T-cell (primary cell): ENCODE measurements at regions of chr11 and their contacts with region 1.

Region 1: GRCh38 chr11:126480410-126481302 is 125.2 kb downstream of the ST3GAL4 start:
- DNase-seq: peak; percentile 32 to 86 (median 58)
- ATAC-seq: peak; percentile 74 to 85 (median 78)
- H3K4me3 ChIP-seq: peak overlapping the region; percentile 38 to 40
- H3K4me3 Mint-ChIP-seq: peak overlapping the region; percentile 26 to 61 (median 50)
- H3K27ac ChIP-seq: no peak overlapping the region
- H3K27ac Mint-ChIP-seq: peak overlapping the region; percentile 60 to 71
- H3K4me1 ChIP-seq: peaks cover 11 to 20% of the 10 kb centered on the region in 2 experiments
- H3K4me1 Mint-ChIP-seq: peaks cover 13 to 22% (median 20%) of the 10 kb centered on the region in 3 donors
- H3K27me3 ChIP-seq: peaks cover 0 to 11% of the 10 kb centered on the region in 2 experiments
- H3K27me3 Mint-ChIP-seq: no peaks in the 10 kb centered on the region

Region 2: GRCh38 chr11:126310228-126310991 is 170.2 kb before region 1 on chr11:
- CTCF ChIA-PET with region 1: interaction called, 12 to 13 read pairs
- POLR2A ChIA-PET with region 1: no interaction called
- DNase-seq: peak in 27 of 35 experiments; percentile 19 to 71 (median 38)
- ATAC-seq: peak; percentile 71 to 79 (median 77)
- H3K4me3 ChIP-seq: no peak overlapping the region
- H3K4me3 Mint-ChIP-seq: no peak overlapping the region
- H3K27ac ChIP-seq: no peak overlapping the region
- H3K27ac Mint-ChIP-seq: peak overlapping the region; percentile 16 to 61
- H3K4me1 ChIP-seq: peaks cover 0 to 24% of the 10 kb centered on the region in 2 experiments
- H3K4me1 Mint-ChIP-seq: peaks cover 26 to 39% (median 28%) of the 10 kb centered on the region in 3 donors
- H3K27me3 ChIP-seq: no peaks in the 10 kb centered on the region
- H3K27me3 Mint-ChIP-seq: no peaks in the 10 kb centered on the region

Region 3: DNA sequence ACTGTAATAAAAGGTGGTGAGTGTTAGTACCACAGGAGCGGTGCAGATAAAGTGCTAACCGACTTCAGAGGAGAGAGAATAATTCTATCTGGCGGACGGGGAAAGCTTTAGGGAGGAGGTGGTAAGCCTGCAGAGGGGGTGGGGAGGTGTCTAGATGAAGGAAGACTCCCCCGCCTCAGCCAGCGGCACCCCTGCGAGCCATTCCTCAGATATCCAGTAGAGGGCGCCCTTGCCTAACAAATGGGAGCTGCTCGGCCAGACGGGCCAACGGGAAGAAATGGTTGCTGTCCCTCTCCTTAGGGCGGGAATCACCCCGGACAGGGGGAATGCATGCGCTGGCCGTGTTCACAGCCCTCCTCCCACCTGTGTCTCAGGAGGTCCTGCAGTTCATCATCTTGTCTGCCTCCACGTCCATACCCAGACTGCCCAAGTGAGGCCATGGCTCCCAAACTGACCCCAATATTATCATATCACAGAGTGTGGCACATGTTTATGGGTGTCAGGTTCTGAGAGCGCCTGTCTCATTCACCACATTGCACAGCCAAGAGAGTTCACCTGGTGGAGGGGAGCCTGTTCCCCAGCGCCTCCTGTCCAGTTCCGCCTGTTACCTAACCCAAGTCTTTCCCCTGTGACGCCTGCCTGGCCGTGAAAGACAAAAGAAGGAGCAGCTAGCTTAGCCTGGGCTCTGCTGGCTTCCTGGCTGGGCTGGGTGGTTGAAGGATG is 39.7 kb before region 1 on chr11:
- CTCF ChIA-PET with region 1: interaction called, 45 to 66 read pairs
- POLR2A ChIA-PET with region 1: no interaction called
- DNase-seq: peak; percentile 31 to 79 (median 62)
- ATAC-seq: peak; percentile 58 to 75 (median 64)
- H3K4me3 ChIP-seq: peak overlapping the region in 1 of 2 donors; percentile 2
- H3K4me3 Mint-ChIP-seq: no peak overlapping the region
- H3K27ac ChIP-seq: no peak overlapping the region
- H3K27ac Mint-ChIP-seq: no peak overlapping the region
- H3K4me1 ChIP-seq: peaks cover 0 to 5% of the 10 kb centered on the region in 2 experiments
- H3K4me1 Mint-ChIP-seq: peaks cover 3 to 6% (median 5%) of the 10 kb centered on the region in 3 donors
- H3K27me3 ChIP-seq: peaks cover 0 to 29% of the 10 kb centered on the region in 2 experiments
- H3K27me3 Mint-ChIP-seq: peaks cover 7 to 23% of the 10 kb centered on the region in 2 donors

Region 4: GRCh38 chr11:126502159-126502558 is 21.5 kb after region 1 on chr11:
- CTCF ChIA-PET with region 1: interaction called in 1 of 2 experiments, 12 read pairs
- POLR2A ChIA-PET with region 1: no interaction called
- DNase-seq: no peak
- ATAC-seq: no peak
- H3K4me3 ChIP-seq: no peak overlapping the region
- H3K4me3 Mint-ChIP-seq: no peak overlapping the region
- H3K27ac ChIP-seq: no peak overlapping the region
- H3K27ac Mint-ChIP-seq: no peak overlapping the region
- H3K4me1 ChIP-seq: no peaks in the 10 kb centered on the region
- H3K4me1 Mint-ChIP-seq: no peaks in the 10 kb centered on the region
- H3K27me3 ChIP-seq: peaks cover 0 to 18% of the 10 kb centered on the region in 2 experiments
- H3K27me3 Mint-ChIP-seq: peaks cover 43 to 45% of the 10 kb centered on the region in 2 donors

Region 5: GRCh38 chr11:126655807-126656128 is 175.1 kb after region 1 on chr11:
- CTCF ChIA-PET with region 1: no interaction called
- POLR2A ChIA-PET with region 1: no interaction called
- DNase-seq: no peak
- ATAC-seq: no peak
- H3K4me3 ChIP-seq: no peak overlapping the region
- H3K4me3 Mint-ChIP-seq: no peak overlapping the region
- H3K27ac ChIP-seq: no peak overlapping the region
- H3K27ac Mint-ChIP-seq: no peak overlapping the region
- H3K4me1 ChIP-seq: no peaks in the 10 kb centered on the region
- H3K4me1 Mint-ChIP-seq: no peaks in the 10 kb centered on the region
- H3K27me3 ChIP-seq: peaks cover 0 to 10% of the 10 kb centered on the region in 2 experiments
- H3K27me3 Mint-ChIP-seq: peaks cover 6 to 21% of the 10 kb centered on the region in 2 donors

Region 6: DNA sequence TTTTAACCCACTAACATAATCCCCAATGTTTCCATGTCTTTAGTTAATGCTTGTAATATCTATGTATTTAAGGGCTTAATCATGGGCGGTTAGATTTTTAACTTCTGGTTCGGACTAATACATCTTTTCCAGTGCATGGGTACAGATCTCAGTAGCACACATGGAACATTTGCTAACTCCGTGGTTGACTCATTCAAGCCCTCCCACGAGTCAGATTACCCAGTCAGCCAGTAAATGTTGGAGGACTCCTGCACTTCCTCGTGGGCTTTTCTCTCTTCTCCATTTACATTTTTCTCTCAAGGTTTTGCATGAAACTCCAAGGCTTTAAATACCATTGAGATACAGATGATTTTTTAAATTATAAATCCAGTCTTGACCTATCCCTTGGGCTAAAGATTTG is 188.8 kb after region 1 on chr11:
- CTCF ChIA-PET with region 1: no interaction called
- POLR2A ChIA-PET with region 1: no interaction called
- DNase-seq: no peak
- ATAC-seq: no peak
- H3K4me3 ChIP-seq: no peak overlapping the region
- H3K4me3 Mint-ChIP-seq: no peak overlapping the region
- H3K27ac ChIP-seq: no peak overlapping the region
- H3K27ac Mint-ChIP-seq: no peak overlapping the region
- H3K4me1 ChIP-seq: no peaks in the 10 kb centered on the region
- H3K4me1 Mint-ChIP-seq: no peaks in the 10 kb centered on the region
- H3K27me3 ChIP-seq: no peaks in the 10 kb centered on the region
- H3K27me3 Mint-ChIP-seq: peaks cover 22 to 26% of the 10 kb centered on the region in 2 donors

Region 7: GRCh38 chr11:127345819-127346459 is 865.3 kb after region 1 on chr11:
- CTCF ChIA-PET with region 1: interaction called in 1 of 2 experiments, 10 read pairs
- POLR2A ChIA-PET with region 1: no interaction called
- DNase-seq: peak in 5 of 35 experiments; percentile 1 to 33 (median 3)
- ATAC-seq: no peak
- H3K4me3 ChIP-seq: no peak overlapping the region
- H3K4me3 Mint-ChIP-seq: no peak overlapping the region
- H3K27ac ChIP-seq: no peak overlapping the region
- H3K27ac Mint-ChIP-seq: no peak overlapping the region
- H3K4me1 ChIP-seq: no peaks in the 10 kb centered on the region
- H3K4me1 Mint-ChIP-seq: no peaks in the 10 kb centered on the region
- H3K27me3 ChIP-seq: no peaks in the 10 kb centered on the region
- H3K27me3 Mint-ChIP-seq: peaks cover 2 to 22% of the 10 kb centered on the region in 2 donors